Dorsolateral prefrontal cortex (tissue), 120 donors: ENCODE measurements at regions of chr19 and their contacts with region 1.

Region 1: GRCh38 chr19:7540761-7541491 is 5.4 kb downstream of the PNPLA6 start:
- DNase-seq: no peak
- H3K4me3 ChIP-seq: no peak overlapping the region
- H3K27ac ChIP-seq: no peak overlapping the region
- H3K27me3 ChIP-seq: no peaks in the 10 kb centered on the region
- CTCF ChIP-seq: no peak

Region 2: GRCh38 chr19:7629347-7630054 is 88.6 kb after region 1 on chr19 and contains the starts of genes PET100 and XAB2:
- intact Hi-C with region 1: loop called in 1 of 2 experiments (anchors 5 kb)
- DNase-seq: peak; percentile 95 to 99 (median 98)
- H3K4me3 ChIP-seq: peak within 1 kb of the TSS; percentile 71 to 100 (median 92)
- H3K27ac ChIP-seq: peak within 1 kb of the TSS in 49 of 59 donors; percentile 15 to 90 (median 72)
- H3K27me3 ChIP-seq: no peaks in the 10 kb centered on the region
- CTCF ChIP-seq: peak in 17 of 56 donors; percentile 8 to 56 (median 25)
- total RNA-seq, gene PET100: 33.4 to 159 (median 92.2) TPM
- total RNA-seq, gene XAB2: 30.8 to 56.2 (median 38.7) TPM